Activated T-helper 2 cell treated with anti-CD3 and anti-CD28 coated beads, Interferon-gamma antibody, Interleukin-2, Interleukin-4, amounts not matched to agents 10 μg/mL and 5 μg/mL and 100 μg/mL, durations not matched to agents 14 hours and 24 hours and 36 hours (primary cell): ENCODE measurements at regions of chr12 and their contacts with region 1.

Region 1: DNA sequence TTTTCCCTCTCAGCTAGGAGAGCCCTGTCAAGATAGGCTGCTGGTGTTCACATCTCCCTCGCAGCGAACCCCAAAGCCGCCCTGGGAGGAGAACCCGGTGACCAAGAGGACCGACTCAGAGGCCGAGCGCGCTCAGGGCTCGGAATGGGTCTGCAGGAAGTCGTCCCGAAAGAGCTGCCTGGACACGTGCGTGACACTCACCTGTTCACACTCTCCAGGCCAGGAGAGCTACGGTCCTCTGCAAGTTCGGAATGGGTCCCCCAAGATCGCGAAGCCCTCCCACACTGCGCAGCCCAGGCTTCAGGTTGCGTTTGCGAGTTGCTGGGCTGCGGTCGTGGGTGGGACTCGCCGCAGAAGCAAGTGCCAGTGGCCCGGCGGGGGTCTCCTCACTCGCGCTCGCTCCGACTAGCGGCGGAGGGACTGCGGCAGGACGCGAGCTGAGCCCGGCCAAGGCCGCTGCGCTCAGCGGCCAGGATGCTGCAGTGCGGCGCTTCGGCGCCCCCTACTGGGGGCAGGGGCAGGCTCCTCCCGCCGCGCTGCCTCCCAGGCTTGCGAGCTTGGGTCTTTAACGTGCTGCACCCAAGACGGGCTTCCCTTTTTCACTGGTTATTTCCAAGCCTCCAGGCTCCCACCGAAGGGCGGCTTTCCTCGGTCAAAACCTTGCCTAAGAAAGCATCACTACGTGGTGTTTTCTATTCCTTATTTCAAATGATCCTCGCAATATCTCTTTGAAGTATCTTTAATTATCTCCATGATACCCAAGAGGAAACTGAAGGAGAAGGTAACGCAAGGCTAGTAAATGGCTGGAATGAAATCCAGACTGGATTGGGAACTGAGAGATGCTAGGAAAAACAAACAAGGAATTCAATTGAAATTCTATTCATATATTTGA is at the start of gene RERG:
- DNase-seq: peak; percentile 61
- H3K4me3 Mint-ChIP-seq: peak within 1 kb of the TSS; percentile 53
- H3K27ac Mint-ChIP-seq: no peak within 1 kb of the TSS
- H3K4me1 Mint-ChIP-seq: no peaks in the 10 kb centered on the region
- H3K27me3 Mint-ChIP-seq: peaks cover 41% of the 10 kb centered on the region
- total RNA-seq, gene RERG: not detected in 2 replicates

Region 2: GRCh38 chr12:14845350-14845750 is 375.9 kb before region 1 on chr12:
- intact Hi-C with region 1: loop called (anchors 5 kb)
- DNase-seq: no peak
- H3K4me3 Mint-ChIP-seq: no peak overlapping the region
- H3K27ac Mint-ChIP-seq: no peak overlapping the region
- H3K4me1 Mint-ChIP-seq: peaks cover 4% of the 10 kb centered on the region
- H3K27me3 Mint-ChIP-seq: no peaks in the 10 kb centered on the region

Region 3: GRCh38 chr12:15001733-15002382 is 219.4 kb before region 1 on chr12:
- intact Hi-C with region 1: loop called (anchors 5 kb)
- DNase-seq: no peak
- H3K4me3 Mint-ChIP-seq: no peak overlapping the region
- H3K27ac Mint-ChIP-seq: no peak overlapping the region
- H3K4me1 Mint-ChIP-seq: no peaks in the 10 kb centered on the region
- H3K27me3 Mint-ChIP-seq: peaks cover 72% of the 10 kb centered on the region

Region 4: DNA sequence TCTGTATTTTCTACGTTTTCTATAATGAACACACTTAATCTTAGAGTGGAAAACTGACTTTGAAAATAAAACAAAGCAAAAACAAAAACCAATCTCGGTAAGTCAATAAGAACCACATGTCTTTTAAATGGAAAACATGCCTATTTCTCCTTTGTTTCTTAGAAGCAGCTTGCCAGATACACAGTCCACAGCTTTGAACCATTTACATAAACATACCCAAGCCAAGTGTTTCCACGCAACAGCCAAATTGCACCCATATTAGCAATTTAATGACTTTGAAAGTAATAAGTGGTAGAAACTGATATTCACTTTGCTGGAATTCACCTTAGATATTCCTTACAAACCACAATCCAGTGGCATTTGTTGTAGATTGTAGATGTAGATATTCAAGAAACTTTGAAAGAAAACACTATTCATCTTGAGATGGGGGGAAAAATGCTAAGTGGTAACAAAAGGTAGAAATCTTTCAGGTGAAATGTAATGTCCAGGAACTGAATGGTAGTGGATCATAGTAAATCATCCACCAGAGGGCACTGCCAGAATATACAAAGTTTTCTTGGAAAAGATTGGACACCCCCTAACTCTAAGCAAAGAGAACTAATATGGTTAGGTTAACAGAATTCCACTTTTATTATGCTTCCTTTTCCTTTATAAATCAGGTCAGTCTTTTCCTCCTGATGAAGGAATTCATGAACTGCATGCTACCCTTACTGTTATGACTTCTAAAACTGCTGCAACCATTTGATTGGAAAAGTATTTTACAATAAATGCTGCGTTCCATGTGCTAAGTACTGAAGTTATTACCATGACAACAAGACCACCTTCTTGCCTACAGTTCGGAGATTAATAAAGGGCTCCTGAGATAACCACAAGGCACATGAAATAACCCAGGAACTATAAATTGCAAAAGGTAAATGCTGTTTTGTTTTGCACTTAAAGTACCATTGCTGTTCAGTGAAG is 69.8 kb before region 1 on chr12:
- intact Hi-C with region 1: loop called (anchors 5 kb)
- DNase-seq: no peak
- H3K4me3 Mint-ChIP-seq: no peak overlapping the region
- H3K27ac Mint-ChIP-seq: no peak overlapping the region
- H3K4me1 Mint-ChIP-seq: no peaks in the 10 kb centered on the region
- H3K27me3 Mint-ChIP-seq: peaks cover 4% of the 10 kb centered on the region

Region 5: GRCh38 chr12:15522565-15523187 is 301.4 kb after region 1 on chr12:
- intact Hi-C with region 1: loop called (anchors 5 kb)
- DNase-seq: no peak
- H3K4me3 Mint-ChIP-seq: no peak overlapping the region
- H3K27ac Mint-ChIP-seq: no peak overlapping the region
- H3K4me1 Mint-ChIP-seq: peaks cover 5% of the 10 kb centered on the region
- H3K27me3 Mint-ChIP-seq: peaks cover 44% of the 10 kb centered on the region